K562 (cell line): ENCODE measurements at regions of chr17 and their contacts with region 1.

Region 1: DNA sequence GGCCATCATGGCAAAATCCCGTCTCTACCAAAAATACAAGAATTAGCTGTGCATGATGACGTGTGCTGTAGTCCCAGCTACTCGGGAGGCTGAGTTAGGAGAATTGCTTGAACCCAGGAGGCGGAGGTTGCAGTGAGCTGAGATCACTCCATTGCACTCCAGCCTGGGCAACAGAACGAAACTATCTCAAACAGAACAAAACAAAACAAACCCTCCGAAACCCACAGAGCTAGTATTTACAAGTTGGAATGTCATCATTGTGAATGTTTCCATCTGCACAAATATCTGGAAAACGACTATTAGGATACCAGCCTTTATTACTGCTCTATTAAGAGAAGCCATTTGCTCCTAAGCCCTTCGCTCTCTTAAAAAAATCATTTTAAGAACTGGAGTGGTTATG is 26.0 kb downstream of the SMARCE1 start:
- DNase-seq: no peak
- ATAC-seq: no peak
- H3K4me3 ChIP-seq: no peak overlapping the region
- H3K27ac ChIP-seq: no peak overlapping the region
- H3K4me1 ChIP-seq: no peaks in the 10 kb centered on the region
- H3K27me3 ChIP-seq: peaks cover 17 to 31% of the 10 kb centered on the region in 2 experiments
- CTCF ChIP-seq: no peak
- EP300 ChIP-seq: no peak
- POLR2A ChIP-seq: no peak
- RAD21 ChIP-seq: no peak

Region 2: DNA sequence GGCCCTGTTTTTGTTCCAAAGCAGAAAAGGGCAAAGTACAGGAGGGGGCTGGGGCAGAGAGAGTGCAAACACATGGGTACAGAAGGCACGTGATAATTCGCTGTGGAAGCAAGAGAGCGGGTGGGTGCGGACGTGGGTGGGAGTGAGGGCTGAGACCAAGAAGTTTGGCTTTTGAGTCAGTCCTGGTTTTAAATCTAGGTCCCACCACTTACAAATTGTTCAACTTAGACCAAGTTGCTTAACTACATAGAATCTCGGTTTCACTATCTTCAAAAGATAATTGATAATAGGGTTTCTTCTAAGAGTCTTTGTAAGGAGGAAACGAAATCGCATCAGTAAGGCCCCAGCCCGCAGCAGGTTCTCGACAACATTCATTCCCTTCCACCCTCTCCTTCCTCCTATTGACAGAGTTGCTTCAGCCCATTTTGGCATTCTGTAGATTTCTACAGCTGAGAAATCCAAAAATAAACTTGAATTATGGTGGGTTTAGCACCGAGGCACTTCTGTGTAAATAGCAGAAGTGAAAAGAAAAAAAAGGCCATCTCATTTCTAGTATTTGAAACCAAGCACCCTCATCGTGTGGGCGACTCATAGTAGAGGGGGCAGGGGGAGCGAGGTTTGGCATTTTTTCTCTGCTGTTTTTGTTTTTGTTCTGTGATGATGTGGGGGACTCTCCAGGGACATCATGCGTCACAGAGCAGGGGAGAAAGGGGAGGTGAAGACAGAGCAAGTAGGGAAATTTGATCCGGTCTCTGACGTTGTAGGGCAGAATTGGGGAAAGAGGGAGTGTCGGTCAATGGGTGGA is 22.7 kb before region 1 on chr17:
- CTCF ChIA-PET with region 1: no interaction called
- POLR2A ChIA-PET with region 1: no interaction called
- in situ Hi-C with region 1: no loop called
- intact Hi-C with region 1: no loop called
- DNase-seq: no peak
- ATAC-seq: no peak
- H3K4me3 ChIP-seq: no peak overlapping the region
- H3K27ac ChIP-seq: no peak overlapping the region
- H3K4me1 ChIP-seq: peaks cover 0 to 6% of the 10 kb centered on the region in 2 experiments; a peak in 2 of 5 replicates
- H3K27me3 ChIP-seq: peaks cover 0 to 5% of the 10 kb centered on the region in 2 experiments; a peak in 1 of 5 replicates
- CTCF ChIP-seq: no peak
- EP300 ChIP-seq: no peak
- POLR2A ChIP-seq: no peak
- RAD21 ChIP-seq: no peak

Region 3: DNA sequence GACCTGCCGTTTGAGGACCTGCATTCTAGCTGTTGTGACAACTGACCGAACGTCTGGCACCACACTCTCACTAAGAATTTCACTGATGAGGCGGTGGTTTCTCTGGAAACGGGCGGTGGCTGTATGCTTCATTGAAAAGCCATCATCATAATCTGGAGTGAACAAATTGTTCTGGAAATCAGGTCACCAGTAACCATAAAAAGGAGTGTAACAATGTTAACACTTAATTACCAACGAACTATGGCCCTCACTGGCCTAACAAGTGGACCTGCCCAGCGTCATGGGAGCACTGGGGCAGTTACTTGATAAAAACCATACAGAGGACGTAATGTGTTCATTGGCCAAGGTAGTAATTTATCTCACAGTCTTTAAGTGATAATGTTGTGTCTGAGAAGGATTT is 10.6 kb after region 1 on chr17:
- CTCF ChIA-PET with region 1: no interaction called
- POLR2A ChIA-PET with region 1: interaction called, 11 read pairs
- in situ Hi-C with region 1: no loop called
- intact Hi-C with region 1: no loop called
- DNase-seq: no peak
- ATAC-seq: no peak
- H3K4me3 ChIP-seq: no peak overlapping the region
- H3K27ac ChIP-seq: no peak overlapping the region
- H3K4me1 ChIP-seq: no peaks in the 10 kb centered on the region
- H3K27me3 ChIP-seq: no peaks in the 10 kb centered on the region
- CTCF ChIP-seq: no peak
- EP300 ChIP-seq: no peak
- POLR2A ChIP-seq: no peak
- RAD21 ChIP-seq: no peak

Region 4: DNA sequence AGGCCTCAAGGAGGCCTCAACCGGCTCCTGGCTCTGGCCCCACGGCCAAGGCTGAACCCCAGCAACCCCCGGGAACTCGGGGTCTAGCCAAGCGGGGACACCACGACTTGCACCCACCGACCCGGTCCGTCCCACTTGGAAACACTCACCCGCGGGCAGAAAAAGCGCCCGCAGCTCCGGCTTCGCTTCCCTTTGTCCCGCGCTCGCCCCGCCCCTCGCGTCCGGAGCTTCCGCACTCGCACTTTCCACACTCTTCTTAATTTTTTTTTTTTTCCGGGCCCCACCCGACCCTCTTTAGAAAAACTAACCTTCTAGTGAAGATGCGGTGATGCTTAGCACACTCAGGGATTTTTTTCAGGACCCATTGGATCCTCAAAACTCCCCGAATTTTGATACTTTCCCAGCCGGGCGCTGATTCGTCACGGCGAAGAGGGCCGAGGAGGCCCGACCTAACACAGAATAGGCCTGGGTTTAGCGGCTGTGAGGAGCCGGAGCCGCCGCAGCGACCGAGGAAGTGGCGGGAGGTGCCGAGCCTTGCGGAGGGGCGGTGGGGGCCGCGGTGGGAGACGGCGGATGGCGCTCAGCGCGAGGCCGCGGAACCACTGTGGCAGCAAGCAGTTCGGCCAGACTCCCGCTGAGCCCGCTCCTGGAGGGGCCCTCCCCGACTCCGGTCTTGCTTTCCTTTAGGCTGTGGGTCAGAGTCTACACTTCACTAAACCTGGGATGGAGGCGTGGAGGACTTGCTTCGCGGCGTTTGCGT is 26.2 kb after region 1 on chr17 and contains the start of gene SMARCE1:
- CTCF ChIA-PET with region 1: no interaction called
- POLR2A ChIA-PET with region 1: interaction called, 30 read pairs
- in situ Hi-C with region 1: no loop called
- intact Hi-C with region 1: no loop called
- DNase-seq: peak; percentile 74 to 79 (median 76)
- ATAC-seq: peak; percentile 84
- H3K4me3 ChIP-seq: peak within 1 kb of the TSS; percentile 70
- H3K27ac ChIP-seq: peak within 1 kb of the TSS; percentile 96
- H3K4me1 ChIP-seq: peaks cover 11 to 21% of the 10 kb centered on the region in 2 experiments; a peak in 3 of 5 replicates
- H3K27me3 ChIP-seq: no peaks in the 10 kb centered on the region
- CTCF ChIP-seq: no peak; a peak in 1 of 6 replicates
- EP300 ChIP-seq: peak; percentile 99
- POLR2A ChIP-seq: peak; percentile 86
- RAD21 ChIP-seq: no peak
- polyA plus RNA-seq, gene SMARCE1: 115 to 135 TPM

Region 5: GRCh38 chr17:40791787-40792436 is 170.3 kb after region 1 on chr17:
- CTCF ChIA-PET with region 1: interaction called, 10 read pairs
- POLR2A ChIA-PET with region 1: no interaction called
- in situ Hi-C with region 1: loop called (anchors 5 kb)
- intact Hi-C with region 1: loop called (anchors 2 kb)
- DNase-seq: peak in 2 of 4 experiments; percentile 14 to 15
- ATAC-seq: no peak
- H3K4me3 ChIP-seq: no peak overlapping the region
- H3K27ac ChIP-seq: no peak overlapping the region
- H3K4me1 ChIP-seq: peaks cover 3% of the 10 kb centered on the region in 2 experiments; a peak in 1 of 5 replicates
- H3K27me3 ChIP-seq: peaks cover 21 to 25% of the 10 kb centered on the region in 2 experiments
- CTCF ChIP-seq: peak; percentile 52 to 73 (median 65)
- EP300 ChIP-seq: no peak
- POLR2A ChIP-seq: no peak
- RAD21 ChIP-seq: peak; percentile 54 to 80